ENCODE measurements at regions of chrX and their contacts with region 1.

Region 1: DNA sequence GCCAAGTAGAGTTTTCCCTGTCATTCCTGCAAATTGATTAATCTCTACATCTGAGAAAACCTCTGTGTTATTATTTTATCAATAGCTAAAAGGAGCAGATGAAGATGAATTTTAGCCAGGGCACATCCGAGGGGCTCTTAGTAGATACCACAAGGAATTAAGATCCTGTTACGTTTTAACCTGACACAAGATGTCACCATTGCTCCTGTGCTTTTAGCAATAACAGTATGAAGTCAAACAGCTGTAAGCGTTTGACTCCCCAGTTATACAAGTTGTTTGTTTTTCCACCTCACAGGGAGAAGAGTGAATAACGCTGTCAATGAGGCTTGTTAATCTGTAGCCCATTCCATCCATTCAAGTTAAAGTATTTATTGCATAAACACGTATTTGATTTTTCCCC is 76.0 kb upstream of the AP1S2 start:
- DNase-seq: peak; percentile 62
- H3K4me3 ChIP-seq: no peak overlapping the region
- H3K27ac ChIP-seq: no peak overlapping the region
- H3K4me1 ChIP-seq: peaks cover 24% of the 10 kb centered on the region
- CTCF ChIP-seq: peak; percentile 74

Region 2: GRCh38 chrX:15761564-15762191 is 168.9 kb before region 1 on chrX:
- CTCF ChIA-PET with region 1: no interaction called
- POLR2A ChIA-PET with region 1: no interaction called
- intact Hi-C with region 1: loop called (anchors 2 kb)
- DNase-seq: peak; percentile 43
- H3K4me3 ChIP-seq: no peak overlapping the region
- H3K27ac ChIP-seq: no peak overlapping the region
- H3K4me1 ChIP-seq: no peaks in the 10 kb centered on the region
- CTCF ChIP-seq: peak; percentile 80

Region 3: GRCh38 chrX:16005917-16006316 is 75.3 kb after region 1 on chrX:
- CTCF ChIA-PET with region 1: no interaction called
- POLR2A ChIA-PET with region 1: no interaction called
- intact Hi-C with region 1: no loop called
- DNase-seq: no peak
- H3K4me3 ChIP-seq: no peak overlapping the region
- H3K27ac ChIP-seq: no peak overlapping the region
- H3K4me1 ChIP-seq: no peaks in the 10 kb centered on the region
- CTCF ChIP-seq: no peak

Region 4: GRCh38 chrX:16123222-16123786 is 192.7 kb after region 1 on chrX and contains the start of gene GRPR:
- CTCF ChIA-PET with region 1: no interaction called
- POLR2A ChIA-PET with region 1: no interaction called
- intact Hi-C with region 1: loop called (anchors 5 kb)
- DNase-seq: peak; percentile 89
- H3K4me3 ChIP-seq: no peak within 1 kb of the TSS
- H3K27ac ChIP-seq: peak within 1 kb of the TSS; percentile 13
- H3K4me1 ChIP-seq: peaks cover 82% of the 10 kb centered on the region
- CTCF ChIP-seq: peak; percentile 78
- total RNA-seq, gene GRPR: 0.47 TPM in 1 of 2 replicates, not detected in the other

Region 5: DNA sequence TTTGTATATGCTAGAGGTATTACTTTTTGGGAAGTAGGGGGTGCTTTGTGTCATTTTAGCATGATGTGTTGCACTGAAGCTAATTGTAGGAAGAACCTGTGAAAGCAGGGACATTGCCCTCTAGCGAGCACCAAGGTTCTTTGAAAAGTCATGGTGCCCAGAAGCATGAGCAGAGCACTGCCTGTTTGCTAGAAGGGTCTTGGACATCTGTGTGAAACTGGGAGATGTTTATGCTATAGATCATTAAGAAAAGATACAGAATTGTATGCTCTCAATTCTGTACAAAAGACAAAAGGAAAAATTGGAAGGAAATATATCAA is 207.5 kb after region 1 on chrX:
- CTCF ChIA-PET with region 1: interaction called, 3 read pairs
- POLR2A ChIA-PET with region 1: no interaction called
- intact Hi-C with region 1: loop called (anchors 1 kb)
- DNase-seq: peak; percentile 65
- H3K4me3 ChIP-seq: no peak overlapping the region
- H3K27ac ChIP-seq: no peak overlapping the region
- H3K4me1 ChIP-seq: peaks cover 18% of the 10 kb centered on the region
- CTCF ChIP-seq: peak; percentile 80

Region 6: GRCh38 chrX:16212436-16212835 is 281.9 kb after region 1 on chrX:
- CTCF ChIA-PET with region 1: interaction called, 4 read pairs
- POLR2A ChIA-PET with region 1: no interaction called
- intact Hi-C with region 1: loop called (anchors 2 kb)
- DNase-seq: peak; percentile 27
- H3K4me3 ChIP-seq: no peak overlapping the region
- H3K27ac ChIP-seq: no peak overlapping the region
- H3K4me1 ChIP-seq: no peaks in the 10 kb centered on the region
- CTCF ChIP-seq: peak; percentile 63

Region 7: DNA sequence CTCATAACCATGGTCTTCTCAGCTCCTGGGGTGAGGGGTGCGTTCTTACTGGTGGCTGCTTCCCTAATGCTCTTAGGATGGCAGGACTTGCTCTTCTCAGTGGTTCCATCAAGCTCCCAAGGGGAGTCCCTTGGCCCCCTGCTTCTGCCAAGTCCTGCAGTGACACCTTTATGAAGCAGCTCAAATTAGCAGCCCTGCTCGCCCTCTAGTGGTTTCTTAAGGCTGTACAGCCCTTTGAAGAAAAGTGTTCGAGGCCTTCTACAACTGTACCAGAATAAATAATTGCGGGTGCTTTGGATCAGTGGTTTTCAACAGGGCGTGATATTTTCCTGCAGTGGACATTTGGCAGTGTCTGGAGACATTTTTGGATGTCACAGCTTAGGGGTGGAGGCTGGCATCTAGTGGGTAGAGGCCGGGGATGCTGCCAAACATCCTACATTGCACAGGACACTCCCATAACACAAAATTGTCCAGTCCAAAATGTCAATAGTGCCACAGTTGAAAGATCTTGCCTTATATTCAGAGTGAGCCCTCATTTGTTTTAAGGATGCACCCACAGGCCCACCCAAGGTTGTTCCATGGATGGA is 514.7 kb after region 1 on chrX:
- CTCF ChIA-PET with region 1: no interaction called
- POLR2A ChIA-PET with region 1: no interaction called
- intact Hi-C with region 1: loop called (anchors 2 kb)
- DNase-seq: peak; percentile 48
- H3K4me3 ChIP-seq: no peak overlapping the region
- H3K27ac ChIP-seq: no peak overlapping the region
- H3K4me1 ChIP-seq: no peaks in the 10 kb centered on the region
- CTCF ChIP-seq: peak; percentile 80

Measured in OCI-LY7 (cell line).